Keratinocyte (primary cell): ENCODE measurements at regions of chr10 and their contacts with region 1.

Region 1: DNA sequence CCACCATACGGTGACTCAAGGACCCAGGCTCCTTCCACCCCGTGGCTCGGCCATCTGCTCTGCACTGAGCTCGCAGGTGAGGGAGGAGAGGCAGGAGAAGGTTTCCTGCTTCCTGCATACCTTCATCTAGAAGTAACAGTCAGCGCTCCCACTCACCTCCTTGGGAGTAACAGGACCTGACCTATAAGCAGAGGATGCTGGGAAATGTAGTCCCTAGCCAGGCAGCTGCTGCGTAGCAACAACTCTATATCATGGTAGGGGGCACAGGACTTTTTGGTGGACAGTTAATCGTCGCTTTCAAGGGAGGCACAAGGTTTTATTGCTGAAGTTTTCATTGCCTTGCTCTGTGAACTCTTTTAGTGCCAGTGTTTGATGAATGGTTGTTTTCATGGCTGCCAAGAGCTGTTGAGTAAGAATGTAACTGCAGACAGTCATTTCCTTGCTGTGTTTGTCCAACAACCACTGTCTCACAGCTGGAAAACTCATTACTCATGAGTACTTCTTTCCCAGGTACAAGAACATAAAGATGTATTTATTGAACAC is 10.2 kb upstream of the ZFYVE27 start:
- DNase-seq: no peak
- H3K4me3 ChIP-seq: no peak overlapping the region
- H3K27ac ChIP-seq: peak overlapping the region; percentile 58
- H3K4me1 ChIP-seq: peaks cover 18% of the 10 kb centered on the region
- H3K27me3 ChIP-seq: no peaks in the 10 kb centered on the region
- CTCF ChIP-seq: no peak

Region 2: GRCh38 chr10:97686962-97687784 is 39.5 kb before region 1 on chr10 and contains the start of gene AVPI1:
- dilution Hi-C with region 1: loop called (anchors 5 kb)
- DNase-seq: peak; percentile 91
- H3K4me3 ChIP-seq: peak within 1 kb of the TSS; percentile 85 to 93 (median 86)
- H3K27ac ChIP-seq: peak within 1 kb of the TSS; percentile 92
- H3K4me1 ChIP-seq: peaks cover 53% of the 10 kb centered on the region
- H3K27me3 ChIP-seq: no peaks in the 10 kb centered on the region
- CTCF ChIP-seq: no peak
- polyA plus RNA-seq, gene AVPI1: 22.3 to 83.2 TPM (median 48.8 TPM) in 3 replicates

Region 3: GRCh38 chr10:97762816-97763215 is 36.1 kb after region 1 on chr10:
- dilution Hi-C with region 1: no loop called
- DNase-seq: no peak
- H3K4me3 ChIP-seq: no peak overlapping the region
- H3K27ac ChIP-seq: no peak overlapping the region
- H3K4me1 ChIP-seq: peaks cover 2% of the 10 kb centered on the region
- H3K27me3 ChIP-seq: no peaks in the 10 kb centered on the region
- CTCF ChIP-seq: no peak

Region 4: DNA sequence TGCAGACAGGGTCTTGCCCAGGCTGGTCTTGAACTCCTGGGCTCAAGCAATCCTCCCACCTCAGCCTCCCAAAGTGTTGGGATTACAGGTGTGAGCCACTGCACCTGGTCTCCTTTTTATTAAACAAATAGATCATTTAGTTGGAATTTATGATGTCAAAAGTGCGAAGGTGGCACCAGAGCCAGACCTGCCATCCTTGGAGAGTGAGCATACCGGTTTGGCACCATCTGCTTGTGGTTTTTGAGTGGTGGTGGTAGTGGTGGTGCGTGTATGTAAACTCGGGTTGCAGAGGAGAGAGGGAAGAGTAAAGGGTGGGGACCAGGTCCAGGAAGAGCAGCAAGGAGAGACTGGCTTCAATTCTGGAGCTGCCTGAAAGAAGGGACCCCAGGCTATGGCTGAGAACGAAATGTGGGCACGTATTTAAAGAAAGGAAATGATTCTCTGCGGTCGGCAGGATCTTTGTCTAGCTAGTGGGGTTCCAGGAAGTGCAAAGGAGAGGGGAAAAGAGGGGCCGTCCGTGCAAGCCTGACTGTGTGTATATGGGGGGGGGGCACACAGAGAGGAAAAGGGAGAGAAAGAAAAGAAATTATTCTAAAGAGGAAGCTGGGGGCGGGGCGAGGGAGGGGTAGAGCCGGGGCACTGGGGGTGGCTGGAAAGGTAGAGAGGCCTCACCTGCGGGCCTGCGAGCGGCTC is 122.4 kb after region 1 on chr10:
- dilution Hi-C with region 1: no loop called
- DNase-seq: no peak
- H3K4me3 ChIP-seq: peak overlapping the region; percentile 57 to 79 (median 67)
- H3K27ac ChIP-seq: peak overlapping the region; percentile 26
- H3K4me1 ChIP-seq: peaks cover 39% of the 10 kb centered on the region
- H3K27me3 ChIP-seq: no peaks in the 10 kb centered on the region
- CTCF ChIP-seq: no peak